ENCODE measurements at regions of chr2 and their contacts with region 1.

Region 1: GRCh38 chr2:224357098-224357901 is 44.6 kb downstream of the FAM124B start:
- DNase-seq: peak; percentile 69
- H3K4me3 Mint-ChIP-seq: no peak overlapping the region
- H3K27ac Mint-ChIP-seq: no peak overlapping the region
- H3K4me1 Mint-ChIP-seq: no peaks in the 10 kb centered on the region
- H3K27me3 Mint-ChIP-seq: peaks cover 18% of the 10 kb centered on the region

Region 2: GRCh38 chr2:224308272-224308911 is 48.9 kb before region 1 on chr2:
- CTCF ChIA-PET with region 1: no interaction called
- DNase-seq: no peak
- H3K4me3 Mint-ChIP-seq: no peak overlapping the region
- H3K27ac Mint-ChIP-seq: no peak overlapping the region
- H3K4me1 Mint-ChIP-seq: no peaks in the 10 kb centered on the region
- H3K27me3 Mint-ChIP-seq: peaks cover 8% of the 10 kb centered on the region

Region 3: DNA sequence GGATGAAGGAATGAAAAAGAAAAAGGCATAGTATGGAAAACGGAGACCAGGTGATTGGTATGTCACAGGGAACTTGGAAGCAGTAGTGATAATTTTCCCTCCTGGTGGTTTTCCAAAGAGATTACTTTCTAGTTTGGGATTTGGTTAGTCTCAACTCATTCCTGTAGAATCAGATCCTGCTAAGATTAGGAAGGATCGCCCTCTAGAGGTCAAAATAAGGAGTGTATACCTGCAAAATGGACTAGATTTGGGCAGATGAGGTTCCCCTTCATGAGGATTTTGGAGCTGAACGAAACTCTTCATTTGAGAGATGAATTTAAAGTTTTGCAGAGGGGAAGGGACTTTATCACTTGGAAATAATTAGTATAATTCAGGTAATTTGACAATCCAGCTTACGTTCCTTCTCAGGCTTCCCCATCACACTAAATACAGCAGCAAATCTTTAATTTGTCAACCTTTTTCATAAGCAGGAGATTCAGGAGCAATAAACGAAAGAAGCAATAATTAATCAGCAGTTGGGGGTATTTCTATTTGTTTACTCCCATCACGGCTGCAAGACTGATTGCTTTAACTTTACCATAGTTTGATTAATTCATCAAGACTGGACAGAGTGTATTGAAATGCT is 293.6 kb after region 1 on chr2:
- CTCF ChIA-PET with region 1: interaction called, 10 read pairs
- DNase-seq: no peak
- H3K4me3 Mint-ChIP-seq: no peak overlapping the region
- H3K27ac Mint-ChIP-seq: no peak overlapping the region
- H3K4me1 Mint-ChIP-seq: no peaks in the 10 kb centered on the region
- H3K27me3 Mint-ChIP-seq: peaks cover 4% of the 10 kb centered on the region